CD8-positive, alpha-beta memory T cell (primary cell): ENCODE measurements at regions of chr12 and their contacts with region 1.

Region 1: GRCh38 chr12:132887513-132888351 is at the start of gene CHFR:
- DNase-seq: peak; percentile 93 to 98 (median 95)
- H3K4me3 ChIP-seq: peak within 1 kb of the TSS; percentile 99
- H3K4me3 Mint-ChIP-seq: peak within 1 kb of the TSS; percentile 99 to 100 (median 99)
- H3K27ac ChIP-seq: peak within 1 kb of the TSS; percentile 98
- H3K27ac Mint-ChIP-seq: peak within 1 kb of the TSS; percentile 100
- H3K4me1 ChIP-seq: peaks cover 16% of the 10 kb centered on the region
- H3K4me1 Mint-ChIP-seq: peaks cover 31 to 44% (median 37%) of the 10 kb centered on the region in 3 donors
- H3K27me3 ChIP-seq: no peaks in the 10 kb centered on the region
- H3K27me3 Mint-ChIP-seq: no peaks in the 10 kb centered on the region
- total RNA-seq, gene CHFR: 55.9 to 57.7 TPM

Region 2: GRCh38 chr12:132828706-132829534 is 58.8 kb before region 1 on chr12 and contains the start of gene GOLGA3:
- CTCF ChIA-PET with region 1: interaction called, 3 read pairs
- POLR2A ChIA-PET with region 1: interaction called, 11 read pairs
- DNase-seq: peak; percentile 92 to 96 (median 95)
- H3K4me3 ChIP-seq: peak within 1 kb of the TSS; percentile 69
- H3K4me3 Mint-ChIP-seq: peak within 1 kb of the TSS; percentile 93 to 99 (median 97)
- H3K27ac ChIP-seq: peak within 1 kb of the TSS; percentile 92
- H3K27ac Mint-ChIP-seq: peak within 1 kb of the TSS; percentile 99 to 100 (median 100)
- H3K4me1 ChIP-seq: peaks cover 31% of the 10 kb centered on the region
- H3K4me1 Mint-ChIP-seq: peaks cover 47 to 60% (median 56%) of the 10 kb centered on the region in 3 donors
- H3K27me3 ChIP-seq: no peaks in the 10 kb centered on the region
- H3K27me3 Mint-ChIP-seq: peaks cover 0 to 2% of the 10 kb centered on the region in 2 donors
- total RNA-seq, gene GOLGA3: 63.7 to 68.2 TPM

Region 3: GRCh38 chr12:132956011-132956788 is 68.5 kb after region 1 on chr12 and contains the start of gene ZNF605:
- CTCF ChIA-PET with region 1: no interaction called
- POLR2A ChIA-PET with region 1: no interaction called
- DNase-seq: peak; percentile 82 to 89 (median 85)
- H3K4me3 ChIP-seq: peak within 1 kb of the TSS; percentile 98
- H3K4me3 Mint-ChIP-seq: peak within 1 kb of the TSS; percentile 91 to 98 (median 94)
- H3K27ac ChIP-seq: peak within 1 kb of the TSS; percentile 77
- H3K27ac Mint-ChIP-seq: peak within 1 kb of the TSS; percentile 70 to 97 (median 93)
- H3K4me1 ChIP-seq: peaks cover 12% of the 10 kb centered on the region
- H3K4me1 Mint-ChIP-seq: peaks cover 31 to 46% (median 39%) of the 10 kb centered on the region in 3 donors
- H3K27me3 ChIP-seq: no peaks in the 10 kb centered on the region
- H3K27me3 Mint-ChIP-seq: no peaks in the 10 kb centered on the region
- total RNA-seq, gene ZNF605: 5.6 to 6.2 TPM